ENCODE measurements at regions of chr3 and their contacts with region 1.

Region 1: DNA sequence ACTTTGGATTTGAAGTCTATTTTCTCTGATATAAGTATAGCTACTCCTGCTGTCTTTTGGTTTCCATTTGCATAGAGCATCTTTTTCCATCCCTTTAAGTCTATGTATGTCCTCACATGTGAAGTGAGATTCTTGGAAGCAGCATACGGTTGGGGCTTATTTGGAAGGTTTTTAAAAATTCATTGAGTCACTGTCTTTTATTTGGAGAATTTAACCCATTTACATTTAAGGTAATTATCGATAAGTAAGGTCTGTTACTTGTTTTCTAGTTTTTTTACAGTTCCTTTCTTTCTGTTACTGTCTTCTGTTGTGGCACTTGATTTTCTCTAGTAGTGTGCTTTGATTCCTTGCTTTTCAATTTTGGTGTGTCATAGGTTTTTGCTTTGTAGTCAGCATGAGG is 14.0 kb downstream of the RUBCN start:
- DNase-seq: no peak
- ATAC-seq: no peak
- H3K4me3 ChIP-seq: no peak overlapping the region
- H3K4me3 Mint-ChIP-seq: no peak overlapping the region
- H3K27ac ChIP-seq: no peak overlapping the region
- H3K27ac Mint-ChIP-seq: no peak overlapping the region
- H3K4me1 ChIP-seq: no peaks in the 10 kb centered on the region
- H3K4me1 Mint-ChIP-seq: peaks cover 9 to 18% (median 14%) of the 10 kb centered on the region in 3 donors
- H3K27me3 ChIP-seq: no peaks in the 10 kb centered on the region
- H3K27me3 Mint-ChIP-seq: no peaks in the 10 kb centered on the region

Region 2: DNA sequence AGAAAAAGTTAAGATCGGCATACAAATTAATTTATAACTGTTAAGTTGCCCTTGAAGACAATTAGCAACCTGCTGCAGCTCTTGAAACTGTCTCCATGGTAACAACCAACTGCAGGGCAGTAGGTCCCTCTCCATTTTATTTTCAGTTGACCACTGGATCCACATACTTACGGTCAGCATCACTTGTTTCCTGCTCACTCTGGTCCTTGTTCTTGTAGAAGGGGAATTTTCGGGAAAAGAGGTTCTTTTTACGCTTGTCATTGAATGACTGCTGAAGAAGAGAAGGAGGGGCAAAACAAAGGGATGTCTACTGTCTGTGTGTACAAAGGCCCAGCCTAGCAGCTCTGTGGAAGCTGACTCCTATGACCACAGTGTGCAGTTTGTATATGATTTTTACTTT is 646.3 kb before region 1 on chr3:
- CTCF ChIA-PET with region 1: no interaction called
- POLR2A ChIA-PET with region 1: no interaction called
- DNase-seq: no peak
- ATAC-seq: no peak
- H3K4me3 ChIP-seq: no peak overlapping the region
- H3K4me3 Mint-ChIP-seq: no peak overlapping the region
- H3K27ac ChIP-seq: no peak overlapping the region
- H3K27ac Mint-ChIP-seq: no peak overlapping the region
- H3K4me1 ChIP-seq: no peaks in the 10 kb centered on the region
- H3K4me1 Mint-ChIP-seq: no peaks in the 10 kb centered on the region
- H3K27me3 ChIP-seq: no peaks in the 10 kb centered on the region
- H3K27me3 Mint-ChIP-seq: no peaks in the 10 kb centered on the region

Region 3: GRCh38 chr3:197761784-197762183 is 39.0 kb after region 1 on chr3:
- CTCF ChIA-PET with region 1: no interaction called
- POLR2A ChIA-PET with region 1: interaction called in 1 of 2 experiments, 13 read pairs
- DNase-seq: no peak
- ATAC-seq: no peak
- H3K4me3 ChIP-seq: no peak overlapping the region
- H3K4me3 Mint-ChIP-seq: no peak overlapping the region
- H3K27ac ChIP-seq: no peak overlapping the region
- H3K27ac Mint-ChIP-seq: no peak overlapping the region
- H3K4me1 ChIP-seq: no peaks in the 10 kb centered on the region
- H3K4me1 Mint-ChIP-seq: peaks cover 0 to 6% (median 3%) of the 10 kb centered on the region in 3 donors
- H3K27me3 ChIP-seq: no peaks in the 10 kb centered on the region
- H3K27me3 Mint-ChIP-seq: no peaks in the 10 kb centered on the region